ENCODE measurements at regions of chr1 and their contacts with region 1.

Region 1: DNA sequence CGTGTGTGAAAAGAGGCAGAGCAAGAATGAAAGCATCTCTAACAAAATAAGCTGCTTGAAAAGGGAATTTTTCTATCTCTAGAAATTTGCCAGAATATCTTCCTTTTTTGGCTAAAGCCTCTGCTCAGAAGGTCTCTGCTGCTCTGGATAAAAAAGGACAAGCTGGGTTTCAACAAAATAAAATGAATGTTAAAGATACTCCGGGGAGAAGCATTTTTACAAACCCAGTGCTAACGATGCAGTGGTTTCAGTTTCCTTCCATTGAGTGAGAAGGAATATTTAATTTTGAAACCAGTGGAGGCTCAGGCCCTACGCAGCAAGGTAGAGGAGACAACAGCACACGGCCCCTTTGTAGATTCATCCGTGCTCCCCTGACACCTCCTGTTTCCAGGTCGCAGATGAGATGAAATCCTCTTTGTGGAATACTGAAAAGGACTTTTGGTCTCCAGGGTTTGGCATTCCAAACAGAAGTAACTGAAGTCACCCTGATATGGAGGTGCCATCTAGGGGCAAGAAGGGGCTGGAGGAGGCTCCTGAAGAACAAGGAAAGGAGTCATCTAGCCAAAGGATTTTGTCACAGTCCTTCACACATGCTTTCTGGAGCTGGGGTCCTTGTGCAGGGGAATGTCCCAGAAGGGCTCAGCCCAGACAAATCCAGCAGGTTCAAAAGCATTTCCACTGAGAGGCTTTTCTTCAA is 65.7 kb upstream of the SYT6 start:
- DNase-seq: peak; percentile 2
- ATAC-seq: peak; percentile 42; the same call in 1 of the 2 replicates
- H3K4me3 ChIP-seq: no peak overlapping the region
- H3K27ac ChIP-seq: no peak overlapping the region
- H3K4me1 ChIP-seq: no peaks in the 10 kb centered on the region
- H3K27me3 ChIP-seq: peaks cover 9% of the 10 kb centered on the region
- CTCF ChIP-seq: no peak
- POLR2A ChIP-seq: no peak
- RAD21 ChIP-seq: no peak

Region 2: DNA sequence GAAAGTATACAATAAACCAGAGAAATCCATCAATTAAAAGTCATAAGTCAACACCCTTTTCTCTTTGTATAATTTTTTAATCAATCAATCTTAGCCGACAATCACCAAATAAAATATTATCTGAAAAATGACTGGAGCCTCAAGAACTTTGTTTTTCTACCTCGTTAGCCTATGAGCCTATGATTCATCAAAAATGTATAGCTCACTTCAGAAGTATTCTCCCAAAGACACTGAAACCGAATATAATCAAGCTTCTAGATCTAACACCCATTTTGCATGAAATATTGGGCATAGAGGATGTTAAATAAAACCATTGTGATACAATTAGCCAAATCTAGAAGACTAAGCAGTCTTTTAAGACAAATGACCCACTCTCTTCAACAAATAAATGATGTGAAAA is 389.3 kb before region 1 on chr1:
- CTCF ChIA-PET with region 1: no interaction called
- POLR2A ChIA-PET with region 1: no interaction called
- dilution Hi-C with region 1: no loop called
- in situ Hi-C with region 1: no loop called
- intact Hi-C with region 1: loop called (anchors 5 kb)
- DNase-seq: peak; percentile 61
- ATAC-seq: peak; percentile 66
- H3K4me3 ChIP-seq: no peak overlapping the region
- H3K27ac ChIP-seq: no peak overlapping the region
- H3K4me1 ChIP-seq: no peaks in the 10 kb centered on the region
- H3K27me3 ChIP-seq: no peaks in the 10 kb centered on the region
- CTCF ChIP-seq: no peak
- POLR2A ChIP-seq: no peak
- RAD21 ChIP-seq: no peak

Region 3: GRCh38 chr1:113963281-113963906 is 255.9 kb before region 1 on chr1:
- CTCF ChIA-PET with region 1: no interaction called
- POLR2A ChIA-PET with region 1: no interaction called
- dilution Hi-C with region 1: no loop called
- in situ Hi-C with region 1: no loop called
- intact Hi-C with region 1: no loop called
- DNase-seq: peak; percentile 14
- ATAC-seq: peak; percentile 51
- H3K4me3 ChIP-seq: no peak overlapping the region
- H3K27ac ChIP-seq: no peak overlapping the region
- H3K4me1 ChIP-seq: no peaks in the 10 kb centered on the region
- H3K27me3 ChIP-seq: no peaks in the 10 kb centered on the region
- CTCF ChIP-seq: 0 out of 2 replicates have a peak, but pooled peaks have one; percentile 25
- POLR2A ChIP-seq: no peak
- RAD21 ChIP-seq: peak; percentile 34; the same call in 1 of the 2 replicates

Region 4: GRCh38 chr1:114164840-114165553 is 54.3 kb before region 1 on chr1:
- CTCF ChIA-PET with region 1: no interaction called
- POLR2A ChIA-PET with region 1: no interaction called
- dilution Hi-C with region 1: no loop called
- in situ Hi-C with region 1: no loop called
- intact Hi-C with region 1: no loop called
- DNase-seq: no peak
- ATAC-seq: no peak
- H3K4me3 ChIP-seq: no peak overlapping the region
- H3K27ac ChIP-seq: no peak overlapping the region
- H3K4me1 ChIP-seq: no peaks in the 10 kb centered on the region
- H3K27me3 ChIP-seq: peaks cover 12% of the 10 kb centered on the region
- CTCF ChIP-seq: no peak
- POLR2A ChIP-seq: no peak
- RAD21 ChIP-seq: no peak

Region 5: GRCh38 chr1:114369927-114370326 is 150.6 kb after region 1 on chr1:
- CTCF ChIA-PET with region 1: no interaction called
- POLR2A ChIA-PET with region 1: no interaction called
- dilution Hi-C with region 1: no loop called
- in situ Hi-C with region 1: no loop called
- intact Hi-C with region 1: no loop called
- DNase-seq: no peak
- ATAC-seq: peak; percentile 32
- H3K4me3 ChIP-seq: no peak overlapping the region
- H3K27ac ChIP-seq: no peak overlapping the region
- H3K4me1 ChIP-seq: no peaks in the 10 kb centered on the region
- H3K27me3 ChIP-seq: no peaks in the 10 kb centered on the region
- CTCF ChIP-seq: no peak
- POLR2A ChIP-seq: no peak
- RAD21 ChIP-seq: no peak

Measured in IMR-90 (cell line).